ENCODE measurements at regions of chr18 and their contacts with region 1.

Region 1: DNA sequence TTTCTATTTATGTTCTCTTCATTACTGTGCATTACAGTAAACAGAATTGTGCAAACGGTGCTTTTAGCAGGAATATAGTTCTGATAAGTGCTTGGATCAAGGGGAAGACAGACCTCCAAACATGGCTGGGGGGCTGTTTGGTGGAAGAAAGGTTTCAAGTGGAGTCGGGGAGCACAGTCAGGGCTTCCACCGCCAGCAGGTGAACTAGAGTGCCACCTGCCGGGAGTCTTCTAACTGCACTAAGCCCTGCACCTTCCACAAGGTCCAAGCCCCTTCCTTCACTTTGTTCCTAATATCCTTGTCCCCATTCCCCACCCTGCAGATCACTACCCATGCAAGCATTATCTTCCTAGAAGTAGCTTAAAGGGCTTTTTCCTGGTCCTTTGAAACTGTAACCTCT is 11.1 kb downstream of the ONECUT2 start:
- DNase-seq: no peak
- ATAC-seq: no peak
- H3K4me3 Mint-ChIP-seq: no peak overlapping the region
- H3K27ac Mint-ChIP-seq: no peak overlapping the region
- H3K4me1 Mint-ChIP-seq: peaks cover 5% of the 10 kb centered on the region
- H3K27me3 Mint-ChIP-seq: peaks cover 62% of the 10 kb centered on the region
- CTCF ChIP-seq: no peak

Region 2: DNA sequence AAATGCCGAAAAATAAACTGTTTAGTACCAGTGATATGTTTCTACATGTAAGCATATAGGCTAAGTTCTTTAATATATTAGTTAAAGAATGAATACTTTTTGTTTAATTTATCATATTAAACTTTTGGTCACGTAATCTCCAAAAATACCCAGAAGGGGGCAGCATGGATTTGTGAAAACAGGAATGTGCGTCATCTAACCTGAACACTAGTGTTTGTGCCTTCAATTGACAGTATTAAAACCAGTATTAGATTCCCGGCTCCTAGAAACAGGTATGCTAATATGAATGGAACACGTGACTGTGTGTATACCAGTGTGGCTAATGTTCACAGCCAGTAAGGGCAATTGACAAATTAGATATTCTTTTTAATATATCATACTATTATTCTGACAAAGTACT is 743.4 kb before region 1 on chr18:
- CTCF ChIA-PET with region 1: no interaction called
- POLR2A ChIA-PET with region 1: no interaction called
- intact Hi-C with region 1: loop called (anchors 1 kb)
- DNase-seq: no peak
- ATAC-seq: no peak
- H3K4me3 Mint-ChIP-seq: no peak overlapping the region
- H3K27ac Mint-ChIP-seq: no peak overlapping the region
- H3K4me1 Mint-ChIP-seq: peaks cover 2% of the 10 kb centered on the region
- H3K27me3 Mint-ChIP-seq: no peaks in the 10 kb centered on the region
- CTCF ChIP-seq: no peak

Region 3: DNA sequence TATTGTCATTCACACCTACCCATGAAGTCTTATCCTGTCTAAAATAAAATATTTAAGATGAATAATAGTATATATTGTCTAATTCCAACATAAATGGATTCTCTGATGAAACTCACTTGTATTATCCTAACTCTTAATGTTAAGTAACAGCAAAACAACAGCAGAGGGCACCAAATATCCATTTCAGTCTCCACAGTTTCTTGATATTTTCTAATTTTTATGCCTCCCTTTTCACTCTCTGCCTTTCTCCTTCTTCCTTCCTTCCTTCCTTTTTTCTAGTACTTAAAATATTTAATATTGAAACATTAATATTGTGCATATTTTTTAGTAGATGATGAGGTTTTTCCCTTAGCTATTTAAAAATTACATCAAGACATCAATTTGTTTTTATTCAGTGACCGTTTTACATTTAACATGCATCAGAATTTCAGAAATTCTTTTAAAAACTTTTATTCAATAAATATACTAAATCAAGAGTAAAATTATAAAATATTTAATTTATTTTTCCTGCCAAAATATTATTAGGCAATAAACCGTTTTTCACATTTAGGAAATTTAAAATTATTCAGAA is 697.5 kb before region 1 on chr18:
- CTCF ChIA-PET with region 1: interaction called, 4 read pairs
- POLR2A ChIA-PET with region 1: no interaction called
- intact Hi-C with region 1: loop called (anchors 1 kb)
- DNase-seq: no peak
- ATAC-seq: no peak
- H3K4me3 Mint-ChIP-seq: no peak overlapping the region
- H3K27ac Mint-ChIP-seq: no peak overlapping the region
- H3K4me1 Mint-ChIP-seq: peaks cover 20% of the 10 kb centered on the region
- H3K27me3 Mint-ChIP-seq: no peaks in the 10 kb centered on the region
- CTCF ChIP-seq: no peak

Region 4: DNA sequence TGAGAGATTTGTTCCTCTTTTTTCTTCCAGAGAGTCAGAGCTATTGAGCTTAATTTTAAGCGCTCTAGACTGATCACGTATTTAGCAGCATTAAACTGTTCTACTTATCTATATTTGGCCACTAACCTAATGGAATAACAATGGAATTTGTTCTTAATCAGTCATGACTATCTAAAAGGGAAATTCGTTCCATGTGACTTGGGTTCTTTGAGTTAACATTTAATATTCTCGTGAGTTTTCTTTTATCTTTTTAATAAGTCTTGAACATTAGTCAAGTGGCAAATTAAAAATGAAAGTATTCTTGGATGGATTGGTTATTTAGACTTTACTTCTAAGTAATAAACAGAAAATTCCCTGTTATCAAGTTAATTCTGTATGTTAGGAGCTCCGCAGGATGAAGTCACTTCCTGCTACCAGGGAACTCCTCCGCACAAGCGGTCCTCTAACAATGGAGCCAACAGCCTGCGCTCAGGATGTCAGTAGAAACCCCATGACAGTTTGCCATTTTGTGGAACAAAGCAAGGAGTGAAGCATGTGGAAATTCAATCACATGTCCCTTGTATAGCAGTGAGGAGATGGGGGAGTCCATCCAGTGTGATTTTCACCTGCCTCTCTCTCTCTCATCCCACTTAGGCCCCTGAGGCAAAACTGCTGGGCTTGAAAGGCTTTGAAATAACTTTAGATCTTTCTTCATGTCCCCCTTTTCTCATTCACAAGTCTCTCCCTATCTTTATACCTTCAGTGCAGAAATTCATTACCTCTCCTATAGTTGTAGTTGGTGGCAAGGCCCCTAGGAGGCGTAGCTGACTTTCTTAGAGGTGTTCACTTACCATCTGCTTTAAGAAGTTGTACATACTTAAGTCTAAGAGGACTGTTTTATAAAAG is 657.1 kb before region 1 on chr18:
- CTCF ChIA-PET with region 1: interaction called, 3 read pairs
- POLR2A ChIA-PET with region 1: no interaction called
- intact Hi-C with region 1: loop called (anchors 1 kb)
- DNase-seq: no peak
- ATAC-seq: no peak
- H3K4me3 Mint-ChIP-seq: no peak overlapping the region
- H3K27ac Mint-ChIP-seq: no peak overlapping the region
- H3K4me1 Mint-ChIP-seq: no peaks in the 10 kb centered on the region
- H3K27me3 Mint-ChIP-seq: no peaks in the 10 kb centered on the region
- CTCF ChIP-seq: peak; percentile 19

Region 5: DNA sequence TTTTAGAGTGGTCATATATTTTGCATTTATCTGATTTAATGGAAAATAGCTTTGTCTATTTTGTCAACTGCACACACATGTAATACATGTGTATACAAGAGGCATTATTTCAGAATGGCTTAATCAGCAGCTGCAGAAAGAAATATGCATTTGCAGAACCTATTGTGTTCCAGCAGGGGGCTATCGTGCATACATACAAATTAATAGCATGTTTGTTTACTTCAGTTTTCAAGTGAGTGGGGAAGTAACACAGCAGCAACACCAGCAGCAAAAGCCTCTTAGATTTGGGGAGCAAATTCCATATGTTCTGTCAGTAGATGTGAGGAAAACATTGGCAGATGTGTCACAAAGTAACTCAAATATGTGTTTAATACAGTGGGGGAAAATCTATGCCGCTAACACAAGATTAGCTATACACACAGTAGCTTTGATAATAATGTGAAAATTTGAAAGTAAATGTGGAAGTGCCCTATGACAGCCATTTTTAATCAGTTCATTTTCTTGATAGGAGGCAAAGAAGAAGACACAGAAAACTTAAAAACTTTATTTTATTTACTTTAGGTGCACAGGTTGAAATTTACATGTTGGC is 577.0 kb before region 1 on chr18:
- CTCF ChIA-PET with region 1: interaction called, 6 read pairs
- POLR2A ChIA-PET with region 1: no interaction called
- intact Hi-C with region 1: loop called (anchors 1 kb)
- DNase-seq: no peak
- ATAC-seq: no peak
- H3K4me3 Mint-ChIP-seq: no peak overlapping the region
- H3K27ac Mint-ChIP-seq: no peak overlapping the region
- H3K4me1 Mint-ChIP-seq: no peaks in the 10 kb centered on the region
- H3K27me3 Mint-ChIP-seq: no peaks in the 10 kb centered on the region
- CTCF ChIP-seq: peak; percentile 38

Region 6: GRCh38 chr18:57466745-57467409 is 20.6 kb after region 1 on chr18:
- CTCF ChIA-PET with region 1: no interaction called
- POLR2A ChIA-PET with region 1: no interaction called
- intact Hi-C with region 1: no loop called
- DNase-seq: no peak
- ATAC-seq: no peak
- H3K4me3 Mint-ChIP-seq: no peak overlapping the region
- H3K27ac Mint-ChIP-seq: no peak overlapping the region
- H3K4me1 Mint-ChIP-seq: no peaks in the 10 kb centered on the region
- H3K27me3 Mint-ChIP-seq: peaks cover 22% of the 10 kb centered on the region
- CTCF ChIP-seq: no peak

Region 7: GRCh38 chr18:58297198-58297597 is 850.9 kb after region 1 on chr18:
- CTCF ChIA-PET with region 1: no interaction called
- POLR2A ChIA-PET with region 1: no interaction called
- intact Hi-C with region 1: no loop called
- DNase-seq: no peak
- ATAC-seq: no peak
- H3K4me3 Mint-ChIP-seq: no peak overlapping the region
- H3K27ac Mint-ChIP-seq: no peak overlapping the region
- H3K4me1 Mint-ChIP-seq: peaks cover 5% of the 10 kb centered on the region
- H3K27me3 Mint-ChIP-seq: no peaks in the 10 kb centered on the region
- CTCF ChIP-seq: no peak